ENCODE measurements at regions of chr1 and their contacts with region 1.

Region 1: GRCh38 chr1:20574686-20575540 is 14.0 kb upstream of the CDA start:
- DNase-seq: peak; percentile 91
- ATAC-seq: peak; percentile 96

Region 2: DNA sequence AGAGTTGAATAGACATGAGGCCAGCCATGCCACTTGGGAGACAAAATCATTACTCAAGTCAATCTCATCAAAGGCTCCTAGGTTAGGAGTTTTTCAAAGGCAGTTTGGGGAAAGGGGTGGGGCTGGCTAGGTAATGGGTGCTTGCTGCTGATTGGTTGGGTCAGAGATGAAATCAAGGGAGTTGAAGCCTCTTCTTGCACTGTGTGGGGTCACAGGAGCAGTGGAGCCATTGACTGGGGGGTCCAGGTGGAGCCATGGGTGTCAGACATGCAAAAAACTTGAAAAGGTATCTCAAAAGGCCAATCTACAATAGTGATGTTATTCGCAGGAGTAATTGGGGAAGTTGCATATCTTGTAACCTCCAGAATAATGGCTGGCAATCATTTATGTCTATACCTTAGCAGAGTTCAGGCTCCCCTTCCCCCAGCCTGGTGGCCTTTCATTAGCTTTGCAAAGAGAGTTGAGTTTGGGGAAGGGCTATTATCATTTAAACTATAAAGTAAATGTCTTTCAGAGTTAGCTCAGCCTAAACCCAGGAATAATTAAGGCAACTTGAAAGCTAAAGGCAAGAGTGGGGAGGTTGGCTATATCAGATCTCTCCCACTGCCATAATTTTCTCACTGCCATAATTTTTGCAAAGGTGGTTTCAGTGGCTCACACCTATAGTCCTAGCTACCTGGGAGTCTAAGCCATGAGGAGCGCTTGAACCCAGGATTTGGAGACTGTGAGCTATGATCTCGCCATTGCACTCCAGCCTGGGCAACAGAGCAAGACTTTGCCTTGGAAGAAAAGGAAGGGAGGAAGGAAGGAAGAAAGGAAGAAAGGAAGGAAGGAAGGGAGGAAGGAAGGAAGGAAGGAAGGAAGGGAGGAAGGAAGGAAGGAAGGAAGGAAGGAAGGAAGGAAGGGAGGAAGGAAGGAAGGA is 50.5 kb after region 1 on chr1:
- intact Hi-C with region 1: loop called (anchors 10 kb)
- DNase-seq: no peak
- ATAC-seq: no peak